WTC11 (cell line): ENCODE measurements at regions of chr4 and their contacts with region 1.

Region 1: DNA sequence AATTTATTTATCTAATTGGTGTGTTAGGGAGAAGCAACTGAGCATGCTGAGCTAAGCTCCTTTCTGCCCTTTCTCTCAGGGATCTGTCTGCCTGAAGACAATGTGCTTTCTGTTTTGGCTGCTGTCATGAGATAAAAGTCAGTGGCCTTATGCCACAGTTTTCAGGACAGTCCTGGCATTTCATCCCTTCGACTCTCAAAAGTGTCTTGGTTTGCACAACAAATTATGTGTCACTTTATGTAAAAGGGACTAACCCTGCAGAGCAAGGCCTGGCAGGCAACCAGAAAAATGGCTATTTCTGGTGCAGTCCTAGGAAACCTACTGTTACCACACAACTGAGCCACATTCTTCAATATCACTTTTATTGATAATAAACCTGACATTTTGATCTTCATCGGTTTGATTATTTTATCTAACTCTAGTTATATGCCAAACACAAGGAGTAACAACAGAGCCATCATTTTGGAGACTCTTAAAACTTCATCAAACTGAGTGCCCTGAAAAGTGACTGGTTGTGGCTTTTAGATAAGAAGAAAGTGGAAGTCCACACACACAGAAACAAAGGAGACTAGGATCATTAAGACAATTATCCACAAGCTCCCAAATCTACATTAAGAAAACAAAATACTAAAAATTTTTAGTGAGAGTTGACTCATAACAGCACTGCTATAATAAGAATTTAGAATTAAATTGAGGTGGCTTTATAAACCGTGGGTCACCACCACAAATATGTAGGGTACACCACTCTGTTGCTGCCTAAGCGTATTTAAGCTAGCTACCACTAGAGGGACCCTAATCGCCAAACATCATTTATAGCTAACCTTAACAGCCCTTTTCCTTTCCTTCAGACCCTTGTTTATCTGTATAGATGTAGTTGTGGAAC is 95.9 kb upstream of the PTPN13 start:
- DNase-seq: no peak
- ATAC-seq: peak; percentile 96
- H3K4me3 Mint-ChIP-seq: no peak overlapping the region
- H3K27ac Mint-ChIP-seq: no peak overlapping the region
- H3K4me1 Mint-ChIP-seq: peaks cover 35% of the 10 kb centered on the region
- H3K27me3 Mint-ChIP-seq: no peaks in the 10 kb centered on the region
- CTCF ChIP-seq: peak; percentile 55

Region 2: GRCh38 chr4:86452947-86453531 is 45.2 kb before region 1 on chr4:
- CTCF ChIA-PET with region 1: interaction called, 10 read pairs
- POLR2A ChIA-PET with region 1: no interaction called
- DNase-seq: no peak
- ATAC-seq: peak; percentile 21; the same call in 1 of the 2 replicates
- H3K4me3 Mint-ChIP-seq: no peak overlapping the region
- H3K27ac Mint-ChIP-seq: no peak overlapping the region
- H3K4me1 Mint-ChIP-seq: peaks cover 67% of the 10 kb centered on the region
- H3K27me3 Mint-ChIP-seq: no peaks in the 10 kb centered on the region; the same call in 1 of the 2 replicates
- CTCF ChIP-seq: no peak

Region 3: DNA sequence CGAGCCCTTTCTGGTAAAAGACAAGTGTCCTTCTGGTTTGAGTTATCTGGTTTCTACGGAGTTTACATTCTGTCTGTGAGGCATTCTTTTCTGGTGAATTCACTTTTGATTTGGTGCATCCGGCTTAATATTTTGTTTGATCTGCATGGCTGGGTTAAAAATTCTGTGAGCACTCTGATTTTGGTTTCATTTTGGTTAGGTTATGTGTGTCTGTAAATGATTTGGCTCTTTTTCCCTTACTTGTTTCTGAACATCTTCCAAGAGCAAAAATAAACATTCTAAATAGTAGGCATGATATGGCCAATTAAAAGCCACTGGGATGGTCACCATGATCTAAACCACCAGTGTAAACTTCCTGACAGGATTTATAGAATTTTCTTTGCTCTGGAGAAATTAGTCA is 10.2 kb after region 1 on chr4:
- CTCF ChIA-PET with region 1: interaction called, 11 read pairs
- POLR2A ChIA-PET with region 1: no interaction called
- DNase-seq: no peak
- ATAC-seq: no peak
- H3K4me3 Mint-ChIP-seq: no peak overlapping the region
- H3K27ac Mint-ChIP-seq: no peak overlapping the region
- H3K4me1 Mint-ChIP-seq: peaks cover 24% of the 10 kb centered on the region
- H3K27me3 Mint-ChIP-seq: no peaks in the 10 kb centered on the region
- CTCF ChIP-seq: no peak

Region 4: GRCh38 chr4:86600007-86600653 is 101.9 kb after region 1 on chr4:
- CTCF ChIA-PET with region 1: interaction called, 16 read pairs
- POLR2A ChIA-PET with region 1: no interaction called
- DNase-seq: no peak
- ATAC-seq: no peak
- H3K4me3 Mint-ChIP-seq: no peak overlapping the region
- H3K27ac Mint-ChIP-seq: no peak overlapping the region
- H3K4me1 Mint-ChIP-seq: peaks cover 36% of the 10 kb centered on the region
- H3K27me3 Mint-ChIP-seq: no peaks in the 10 kb centered on the region
- CTCF ChIP-seq: no peak

Region 5: DNA sequence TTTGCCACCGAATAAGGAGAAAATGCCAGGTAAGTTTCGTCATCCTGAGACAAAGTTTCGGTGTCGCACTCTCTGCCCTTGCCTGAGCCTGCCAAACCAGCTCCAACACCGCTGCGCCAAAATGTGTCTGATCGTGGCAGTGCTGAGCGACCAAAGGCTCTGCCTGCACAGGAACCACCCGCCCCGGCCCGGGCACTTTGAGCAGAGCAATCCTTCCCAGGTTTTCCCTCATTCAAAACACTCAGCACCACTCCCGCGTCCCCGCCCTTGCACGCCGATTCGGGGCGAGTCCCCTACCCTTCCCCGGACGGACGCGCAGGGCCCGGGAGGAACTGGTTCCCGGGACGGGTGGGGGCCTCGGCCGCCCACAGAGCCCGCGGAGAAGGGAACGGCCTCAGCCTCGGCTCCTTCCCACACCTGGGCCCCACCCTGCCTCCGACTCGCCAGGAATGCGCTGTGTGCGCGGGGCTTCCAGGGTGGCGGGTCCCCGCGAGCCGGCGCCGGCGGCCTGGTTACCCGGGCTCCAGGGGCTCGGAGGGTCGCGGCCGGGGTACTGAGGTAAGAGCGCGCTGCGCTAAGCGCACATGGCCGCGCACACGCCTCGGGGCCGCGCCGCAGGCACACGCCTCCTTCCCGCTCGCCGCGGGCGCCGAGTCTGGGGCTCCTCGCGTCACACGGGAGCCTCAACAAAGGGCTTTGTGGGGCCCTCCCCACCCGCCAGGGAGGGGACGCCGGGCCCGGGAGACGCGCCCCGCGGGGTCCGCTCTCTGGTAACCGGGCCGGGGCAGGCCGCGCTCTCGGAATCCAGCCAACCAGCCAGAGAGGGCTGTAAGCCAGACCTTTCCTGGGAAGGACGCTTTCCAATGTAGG is 393.8 kb after region 1 on chr4 and contains the start of gene C4orf36:
- CTCF ChIA-PET with region 1: interaction called, 10 read pairs
- POLR2A ChIA-PET with region 1: no interaction called
- DNase-seq: peak; percentile 77
- ATAC-seq: peak; percentile 82
- H3K4me3 Mint-ChIP-seq: peak within 1 kb of the TSS; percentile 75
- H3K27ac Mint-ChIP-seq: peak within 1 kb of the TSS; percentile 82
- H3K4me1 Mint-ChIP-seq: peaks cover 19% of the 10 kb centered on the region
- H3K27me3 Mint-ChIP-seq: peaks cover 15% of the 10 kb centered on the region
- CTCF ChIP-seq: no peak
- total RNA-seq, gene C4orf36: 0.73 to 1.5 TPM (median 0.79 TPM) in 3 replicates